ENCODE measurements at regions of chr14 and their contacts with region 1.

Region 1: GRCh38 chr14:91649930-91650329 is 82.0 kb downstream of the CATSPERB start:
- DNase-seq: peak; percentile 26
- ATAC-seq: peak; percentile 70
- H3K4me3 ChIP-seq: no peak overlapping the region
- H3K27ac ChIP-seq: no peak overlapping the region
- H3K4me1 ChIP-seq: no peaks in the 10 kb centered on the region; a peak in 1 of 4 replicates
- H3K27me3 ChIP-seq: no peaks in the 10 kb centered on the region
- CTCF ChIP-seq: peak; percentile 43 to 80 (median 51); a peak in 5 of 6 replicates
- POLR2A ChIP-seq: no peak
- RAD21 ChIP-seq: peak; percentile 88

Region 2: GRCh38 chr14:91899212-91899611 is 249.3 kb after region 1 on chr14:
- CTCF ChIA-PET with region 1: interaction called, 12 read pairs
- POLR2A ChIA-PET with region 1: no interaction called
- RAD21 ChIA-PET with region 1: no interaction called
- intact Hi-C with region 1: loop called (anchors 1 kb)
- DNase-seq: no peak
- ATAC-seq: peak; percentile 69
- H3K4me3 ChIP-seq: no peak overlapping the region
- H3K27ac ChIP-seq: no peak overlapping the region
- H3K4me1 ChIP-seq: no peaks in the 10 kb centered on the region
- H3K27me3 ChIP-seq: no peaks in the 10 kb centered on the region
- CTCF ChIP-seq: peak; percentile 24 to 39 (median 29); a peak in 3 of 6 replicates
- POLR2A ChIP-seq: no peak
- RAD21 ChIP-seq: peak; percentile 67